ENCODE measurements at regions of chr4 and their contacts with region 1.

Region 1: GRCh38 chr4:99126376-99126775 is 17.7 kb downstream of the ADH4 start:
- DNase-seq: no peak
- H3K27ac ChIP-seq: no peak overlapping the region
- CTCF ChIP-seq: no peak

Region 2: GRCh38 chr4:99379571-99379970 is 253.2 kb after region 1 on chr4:
- CTCF ChIA-PET with region 1: interaction called, 12 read pairs
- POLR2A ChIA-PET with region 1: no interaction called
- DNase-seq: no peak
- H3K27ac ChIP-seq: no peak overlapping the region
- CTCF ChIP-seq: no peak

Measured in RWPE1 (cell line).